PC-9 (cell line): ENCODE measurements at regions of chr3 and their contacts with region 1.

Region 1: GRCh38 chr3:28891485-28891884 is 389.4 kb upstream of the RBMS3 start:
- DNase-seq: no peak
- H3K4me3 ChIP-seq: no peak overlapping the region
- H3K27ac ChIP-seq: no peak overlapping the region
- H3K4me1 ChIP-seq: no peaks in the 10 kb centered on the region
- H3K27me3 ChIP-seq: no peaks in the 10 kb centered on the region
- CTCF ChIP-seq: no peak

Region 2: DNA sequence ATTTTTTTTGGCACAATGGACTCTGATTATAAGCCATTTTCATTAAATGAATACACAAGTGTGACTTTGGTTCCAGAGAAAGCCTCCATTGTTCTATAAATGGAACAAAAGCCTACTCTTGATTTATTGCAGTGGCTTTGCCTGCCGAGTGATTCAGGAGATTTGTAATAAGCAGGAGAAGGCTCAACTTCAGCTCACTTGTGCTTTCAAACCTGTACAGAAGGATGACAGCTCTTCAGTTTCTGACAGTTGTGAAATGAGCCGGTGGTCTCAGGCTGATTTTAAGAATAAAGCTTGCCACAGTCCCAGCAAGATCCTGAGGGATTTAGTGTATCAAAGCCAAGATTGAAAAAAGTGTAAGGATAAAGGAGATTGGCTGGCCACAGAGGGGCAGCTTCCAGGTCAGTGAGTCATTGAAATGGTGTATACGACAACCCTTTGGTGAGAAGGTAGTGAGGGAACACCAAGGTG is 1276.1 kb after region 1 on chr3:
- CTCF ChIA-PET with region 1: no interaction called
- POLR2A ChIA-PET with region 1: interaction called, 10 read pairs
- intact Hi-C with region 1: no loop called
- DNase-seq: peak in 1 of 2 experiments; percentile 2
- H3K4me3 ChIP-seq: no peak overlapping the region
- H3K27ac ChIP-seq: no peak overlapping the region
- H3K4me1 ChIP-seq: no peaks in the 10 kb centered on the region
- H3K27me3 ChIP-seq: no peaks in the 10 kb centered on the region
- CTCF ChIP-seq: no peak